OCI-LY7 (cell line): ENCODE measurements at regions of chr1 and their contacts with region 1.

Region 1: DNA sequence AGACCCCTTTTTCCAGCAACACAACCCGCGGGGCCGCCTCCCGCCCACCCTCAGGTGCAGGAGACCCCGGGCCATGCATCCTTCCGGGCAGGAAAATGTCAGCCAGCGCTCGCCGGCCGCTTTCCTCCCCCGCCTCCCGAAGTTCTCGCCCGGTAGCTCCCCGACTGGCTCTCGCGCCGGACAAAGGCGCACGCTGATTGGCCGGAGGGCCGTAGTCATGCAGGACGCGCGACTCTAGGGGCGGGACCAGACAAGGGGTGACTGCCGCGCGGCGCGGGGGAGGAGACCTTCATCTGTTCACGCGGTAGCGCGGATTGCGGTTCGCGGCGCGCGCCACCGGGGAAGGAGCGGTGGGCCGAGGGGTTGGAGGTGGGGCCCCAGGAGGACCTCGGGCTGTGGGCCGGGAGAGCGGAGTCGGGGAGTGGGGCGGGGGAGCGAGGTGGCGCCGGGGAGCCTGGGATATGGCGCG is at the start of gene FLVCR1:
- DNase-seq: peak; percentile 97
- H3K4me3 ChIP-seq: peak within 1 kb of the TSS; percentile 80
- H3K27ac ChIP-seq: peak within 1 kb of the TSS; percentile 49
- H3K4me1 ChIP-seq: peaks cover 34% of the 10 kb centered on the region
- CTCF ChIP-seq: no peak
- total RNA-seq, gene FLVCR1: 10.4 and 22.4 TPM in 2 replicates

Region 2: GRCh38 chr1:211675230-211676105 is 1182.6 kb before region 1 on chr1 and contains the start of gene NEK2:
- CTCF ChIA-PET with region 1: no interaction called
- POLR2A ChIA-PET with region 1: no interaction called
- intact Hi-C with region 1: loop called (anchors 10 kb)
- DNase-seq: peak; percentile 96
- H3K4me3 ChIP-seq: peak within 1 kb of the TSS; percentile 86
- H3K27ac ChIP-seq: peak within 1 kb of the TSS; percentile 79
- H3K4me1 ChIP-seq: peaks cover 67% of the 10 kb centered on the region
- CTCF ChIP-seq: no peak
- total RNA-seq, gene NEK2: 55.9 and 72.4 TPM in 2 replicates

Region 3: GRCh38 chr1:212814537-212815334 is 43.3 kb before region 1 on chr1:
- CTCF ChIA-PET with region 1: no interaction called
- POLR2A ChIA-PET with region 1: interaction called, 5 read pairs
- intact Hi-C with region 1: loop called (anchors 5 kb)
- DNase-seq: peak; percentile 31
- H3K4me3 ChIP-seq: no peak overlapping the region
- H3K27ac ChIP-seq: no peak overlapping the region
- H3K4me1 ChIP-seq: peaks cover 7% of the 10 kb centered on the region
- CTCF ChIP-seq: peak; percentile 76